Heart right ventricle (tissue), 16 donors: ENCODE measurements at regions of chr18 and their contacts with region 1.

Region 1: GRCh38 chr18:25853691-25854433 is 236.6 kb downstream of the SS18 start:
- DNase-seq: no peak
- ATAC-seq: peak in 1 of 8 donors; percentile 63
- H3K4me3 ChIP-seq: no peak overlapping the region
- H3K27ac ChIP-seq: no peak overlapping the region
- H3K4me1 ChIP-seq: no peaks in the 10 kb centered on the region
- H3K27me3 ChIP-seq: peaks cover 0 to 3% (median 0%) of the 10 kb centered on the region in 7 donors
- CTCF ChIP-seq: no peak

Region 2: GRCh38 chr18:25713104-25713503 is 140.8 kb before region 1 on chr18:
- intact Hi-C with region 1: no loop called
- DNase-seq: no peak
- ATAC-seq: no peak
- H3K4me3 ChIP-seq: no peak overlapping the region
- H3K27ac ChIP-seq: no peak overlapping the region
- H3K4me1 ChIP-seq: no peaks in the 10 kb centered on the region
- H3K27me3 ChIP-seq: peaks cover 0 to 4% (median 0%) of the 10 kb centered on the region in 7 donors
- CTCF ChIP-seq: no peak

Region 3: GRCh38 chr18:25896178-25896780 is 42.4 kb after region 1 on chr18:
- intact Hi-C with region 1: loop called in 1 of 10 experiments (anchors 10 kb)
- DNase-seq: peak in 1 of 2 donors; percentile 9
- ATAC-seq: no peak
- H3K4me3 ChIP-seq: no peak overlapping the region
- H3K27ac ChIP-seq: no peak overlapping the region
- H3K4me1 ChIP-seq: no peaks in the 10 kb centered on the region
- H3K27me3 ChIP-seq: peaks cover 0 to 5% (median 0%) of the 10 kb centered on the region in 7 donors
- CTCF ChIP-seq: peak; percentile 61 to 80 (median 75)